ENCODE measurements at regions of chr2 and their contacts with region 1.

Region 1: GRCh38 chr2:84741296-84741765 is 139.6 kb downstream of the TRABD2A start:
- DNase-seq: no peak
- ATAC-seq: peak in 3 of 4 donors; percentile 41 to 70 (median 49)
- H3K4me3 ChIP-seq: no peak overlapping the region
- H3K27ac ChIP-seq: no peak overlapping the region
- H3K4me1 ChIP-seq: no peaks in the 10 kb centered on the region
- H3K27me3 ChIP-seq: no peaks in the 10 kb centered on the region
- CTCF ChIP-seq: peak in 6 of 12 donors; percentile 10 to 27 (median 21)
- POLR2A ChIP-seq: no peak

Region 2: DNA sequence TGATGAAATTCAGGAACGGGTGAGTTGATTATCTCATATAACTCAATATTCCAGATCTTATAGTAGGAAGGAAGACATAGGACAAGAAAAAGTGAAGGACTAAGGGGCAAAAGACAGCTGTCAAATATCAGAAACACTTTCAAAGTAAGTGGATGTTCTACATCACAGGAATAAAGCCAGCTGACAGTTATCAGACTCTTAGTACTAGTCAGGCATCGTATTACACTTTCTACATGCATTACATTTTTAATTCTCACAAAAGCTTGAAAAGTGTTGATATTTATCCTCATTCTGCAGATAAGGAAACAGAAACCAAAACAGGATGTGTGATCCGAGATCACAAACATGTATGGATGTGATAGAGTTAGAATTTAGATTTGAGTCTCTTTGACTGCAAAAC is 161.7 kb before region 1 on chr2:
- intact Hi-C with region 1: no loop called
- DNase-seq: no peak
- ATAC-seq: no peak
- H3K4me3 ChIP-seq: no peak overlapping the region
- H3K27ac ChIP-seq: no peak overlapping the region
- H3K4me1 ChIP-seq: peaks cover 0 to 4% (median 0%) of the 10 kb centered on the region in 12 donors
- H3K27me3 ChIP-seq: no peaks in the 10 kb centered on the region
- CTCF ChIP-seq: no peak
- POLR2A ChIP-seq: no peak

Region 3: GRCh38 chr2:84729224-84729623 is 12.1 kb before region 1 on chr2:
- intact Hi-C with region 1: loop called in 1 of 10 experiments (anchors 2 kb)
- DNase-seq: no peak
- ATAC-seq: no peak
- H3K4me3 ChIP-seq: no peak overlapping the region
- H3K27ac ChIP-seq: no peak overlapping the region
- H3K4me1 ChIP-seq: no peaks in the 10 kb centered on the region
- H3K27me3 ChIP-seq: no peaks in the 10 kb centered on the region
- CTCF ChIP-seq: no peak
- POLR2A ChIP-seq: no peak

Region 4: GRCh38 chr2:84856787-84857186 is 115.5 kb after region 1 on chr2:
- intact Hi-C with region 1: loop called in 1 of 10 experiments (anchors 10 kb)
- DNase-seq: no peak
- ATAC-seq: no peak
- H3K4me3 ChIP-seq: no peak overlapping the region
- H3K27ac ChIP-seq: peak overlapping the region in 1 of 12 donors; percentile 46
- H3K4me1 ChIP-seq: peaks cover 0 to 19% (median 0%) of the 10 kb centered on the region in 12 donors
- H3K27me3 ChIP-seq: no peaks in the 10 kb centered on the region
- CTCF ChIP-seq: no peak
- POLR2A ChIP-seq: no peak

Region 5: GRCh38 chr2:84870306-84870705 is 129.0 kb after region 1 on chr2:
- intact Hi-C with region 1: no loop called
- DNase-seq: no peak
- ATAC-seq: no peak
- H3K4me3 ChIP-seq: no peak overlapping the region
- H3K27ac ChIP-seq: no peak overlapping the region
- H3K4me1 ChIP-seq: no peaks in the 10 kb centered on the region
- H3K27me3 ChIP-seq: no peaks in the 10 kb centered on the region
- CTCF ChIP-seq: no peak
- POLR2A ChIP-seq: no peak

Region 6: GRCh38 chr2:84919885-84920580 is 178.7 kb after region 1 on chr2:
- intact Hi-C with region 1: no loop called
- DNase-seq: peak in 3 of 5 donors; percentile 40 to 71 (median 55)
- ATAC-seq: peak; percentile 68 to 95 (median 86)
- H3K4me3 ChIP-seq: peak overlapping the region in 5 of 12 donors; percentile 14 to 33 (median 22)
- H3K27ac ChIP-seq: peak overlapping the region; percentile 70 to 94 (median 82)
- H3K4me1 ChIP-seq: peaks cover 0 to 37% (median 10%) of the 10 kb centered on the region in 12 donors
- H3K27me3 ChIP-seq: no peaks in the 10 kb centered on the region
- CTCF ChIP-seq: no peak
- POLR2A ChIP-seq: no peak